Adrenal gland (tissue), 19 donors: ENCODE measurements at regions of chr9 and their contacts with region 1.

Region 1: DNA sequence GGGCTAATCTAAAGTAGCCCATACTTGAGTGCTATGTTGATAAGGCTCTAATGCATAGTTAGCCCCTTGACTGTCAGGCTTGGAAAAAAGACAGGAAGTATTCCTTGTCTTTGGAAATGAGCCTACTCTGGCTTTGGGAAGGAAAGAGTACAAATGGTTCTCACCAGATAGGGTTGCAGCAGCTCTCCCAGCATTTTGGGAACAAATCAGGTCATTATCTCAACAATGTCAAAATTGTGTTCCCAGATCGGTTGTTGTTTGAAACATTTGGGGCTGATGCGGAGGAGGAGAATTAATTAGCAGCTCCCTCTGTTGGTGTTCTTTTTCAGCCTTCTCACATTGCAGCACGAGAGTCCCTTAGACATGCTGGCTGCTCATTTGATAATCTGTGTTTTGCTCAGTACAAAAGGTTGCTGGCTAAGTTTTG is 294.7 kb upstream of the DMRT1 start:
- DNase-seq: peak in 4 of 7 donors; percentile 11 to 27 (median 25)
- H3K4me3 ChIP-seq: no peak overlapping the region
- H3K27ac ChIP-seq: peak overlapping the region in 2 of 5 donors; percentile 19 to 21
- H3K4me1 ChIP-seq: peaks cover 0 to 8% of the 10 kb centered on the region in 2 donors
- H3K27me3 ChIP-seq: no peaks in the 10 kb centered on the region
- CTCF ChIP-seq: peak in 5 of 6 experiments; percentile 15 to 39 (median 31)
- POLR2A ChIP-seq: no peak

Region 2: DNA sequence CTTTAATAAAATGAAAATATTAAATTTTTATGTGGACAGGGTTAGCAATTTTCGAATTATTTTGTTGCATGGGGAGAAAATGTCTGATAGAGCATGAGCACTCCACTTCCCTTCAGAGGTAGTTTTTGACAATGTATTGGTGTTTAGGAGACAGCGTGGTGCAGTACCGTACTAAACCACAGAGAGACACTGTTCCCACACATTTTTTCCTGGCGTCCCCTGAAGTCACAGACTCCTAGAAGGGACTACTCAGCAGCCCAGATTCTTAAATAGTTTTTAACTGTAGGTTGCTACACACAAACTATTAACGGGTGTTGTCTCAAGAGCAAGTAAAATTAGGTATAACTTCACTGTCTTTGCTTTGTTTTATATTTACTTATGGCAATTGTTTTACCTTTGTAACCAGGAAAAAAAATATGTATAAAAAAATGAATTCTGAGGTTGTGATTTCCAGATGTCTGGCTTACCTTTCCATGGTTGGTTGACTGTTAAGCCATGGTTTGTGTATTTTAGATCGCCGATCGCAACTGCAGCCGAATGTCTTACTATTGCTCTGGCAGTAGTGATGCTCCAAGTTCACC is 160.9 kb before region 1 on chr9:
- intact Hi-C with region 1: loop called in 1 of 2 experiments (anchors 5 kb)
- DNase-seq: peak; percentile 35 to 74 (median 47)
- H3K4me3 ChIP-seq: no peak overlapping the region
- H3K27ac ChIP-seq: no peak overlapping the region
- H3K4me1 ChIP-seq: no peaks in the 10 kb centered on the region
- H3K27me3 ChIP-seq: no peaks in the 10 kb centered on the region
- CTCF ChIP-seq: peak; percentile 65 to 88 (median 81)
- POLR2A ChIP-seq: no peak

Region 3: DNA sequence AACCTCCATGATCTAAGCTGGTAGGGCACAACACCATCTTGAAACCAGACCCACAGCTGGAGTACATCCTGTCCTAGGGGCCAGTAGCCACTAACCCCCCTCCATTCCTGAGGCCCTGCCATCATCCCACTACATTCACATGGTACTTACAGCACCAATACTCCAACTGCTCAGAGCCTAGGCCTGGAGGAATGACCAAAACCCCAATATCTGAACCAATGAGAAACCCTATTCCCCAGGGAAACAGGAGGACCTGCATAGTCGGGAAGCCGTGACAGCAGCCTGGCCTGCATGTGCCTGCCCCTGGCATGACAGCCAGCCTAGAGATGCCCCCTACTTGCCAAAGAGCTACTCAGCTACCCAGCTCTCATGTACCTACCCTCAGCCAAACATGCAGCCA is 229.3 kb after region 1 on chr9:
- intact Hi-C with region 1: no loop called
- DNase-seq: no peak
- H3K4me3 ChIP-seq: no peak overlapping the region
- H3K27ac ChIP-seq: no peak overlapping the region
- H3K4me1 ChIP-seq: no peaks in the 10 kb centered on the region
- H3K27me3 ChIP-seq: no peaks in the 10 kb centered on the region
- CTCF ChIP-seq: no peak
- POLR2A ChIP-seq: no peak